Calu3 (cell line): ENCODE measurements at regions of chr3 and their contacts with region 1.

Region 1: GRCh38 chr3:184145111-184145524 is 10.0 kb downstream of the EIF2B5 start:
- DNase-seq: peak; percentile 84
- H3K4me3 Mint-ChIP-seq: no peak overlapping the region
- H3K27ac Mint-ChIP-seq: peak overlapping the region; percentile 43
- H3K4me1 Mint-ChIP-seq: peaks cover 14% of the 10 kb centered on the region
- H3K27me3 Mint-ChIP-seq: no peaks in the 10 kb centered on the region
- CTCF ChIP-seq: peak; percentile 92

Region 2: DNA sequence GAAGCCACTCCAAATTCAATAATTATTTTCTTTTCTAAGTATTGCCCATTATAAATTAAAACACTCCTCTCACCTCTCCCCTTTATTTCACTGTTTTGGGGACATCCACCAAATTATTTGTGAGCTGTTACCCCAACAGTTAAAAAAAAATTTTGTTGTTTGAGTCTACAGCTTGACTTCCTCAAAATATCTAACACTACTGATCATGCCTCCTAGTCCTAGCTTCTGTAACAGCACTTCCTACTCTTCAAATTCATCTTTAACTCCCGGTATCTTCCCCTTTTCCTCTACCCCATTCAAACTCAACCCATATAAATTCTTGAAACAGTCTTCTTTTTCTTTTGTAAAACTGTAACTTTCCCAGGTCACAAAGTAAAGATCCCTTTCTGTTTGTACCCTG is 276.3 kb before region 1 on chr3:
- CTCF ChIA-PET with region 1: no interaction called
- intact Hi-C with region 1: no loop called
- DNase-seq: no peak
- H3K4me3 Mint-ChIP-seq: no peak overlapping the region
- H3K27ac Mint-ChIP-seq: no peak overlapping the region
- H3K4me1 Mint-ChIP-seq: no peaks in the 10 kb centered on the region
- H3K27me3 Mint-ChIP-seq: no peaks in the 10 kb centered on the region
- CTCF ChIP-seq: no peak

Region 3: GRCh38 chr3:184241447-184242296 is 96.6 kb after region 1 on chr3:
- CTCF ChIA-PET with region 1: interaction called, 12 read pairs
- intact Hi-C with region 1: loop called (anchors 1 kb)
- DNase-seq: peak; percentile 94
- H3K4me3 Mint-ChIP-seq: peak overlapping the region; percentile 56
- H3K27ac Mint-ChIP-seq: no peak overlapping the region
- H3K4me1 Mint-ChIP-seq: no peaks in the 10 kb centered on the region
- H3K27me3 Mint-ChIP-seq: peaks cover 39% of the 10 kb centered on the region
- CTCF ChIP-seq: peak; percentile 94

Region 4: GRCh38 chr3:184289426-184289938 is 144.4 kb after region 1 on chr3:
- CTCF ChIA-PET with region 1: no interaction called
- intact Hi-C with region 1: loop called (anchors 2 kb)
- DNase-seq: peak; percentile 90
- H3K4me3 Mint-ChIP-seq: no peak overlapping the region
- H3K27ac Mint-ChIP-seq: no peak overlapping the region
- H3K4me1 Mint-ChIP-seq: no peaks in the 10 kb centered on the region
- H3K27me3 Mint-ChIP-seq: peaks cover 72% of the 10 kb centered on the region
- CTCF ChIP-seq: peak; percentile 97